Prostate gland (tissue), 2 donors: ENCODE measurements at regions of chr20 and their contacts with region 1.

Region 1: GRCh38 chr20:56554869-56555268 is 21.8 kb downstream of the FAM209B start:
- DNase-seq: peak; percentile 43
- H3K4me3 ChIP-seq: no peak overlapping the region
- H3K27ac ChIP-seq: no peak overlapping the region
- H3K4me1 ChIP-seq: no peaks in the 10 kb centered on the region
- H3K27me3 ChIP-seq: no peaks in the 10 kb centered on the region
- CTCF ChIP-seq: peak in 1 of 4 experiments; percentile 33
- POLR2A ChIP-seq: no peak

Region 2: GRCh38 chr20:56453352-56453751 is 101.5 kb before region 1 on chr20:
- intact Hi-C with region 1: no loop called
- DNase-seq: no peak
- H3K4me3 ChIP-seq: no peak overlapping the region
- H3K27ac ChIP-seq: no peak overlapping the region
- H3K4me1 ChIP-seq: no peaks in the 10 kb centered on the region
- H3K27me3 ChIP-seq: no peaks in the 10 kb centered on the region
- CTCF ChIP-seq: no peak
- POLR2A ChIP-seq: no peak

Region 3: GRCh38 chr20:57061058-57061900 is 506.4 kb after region 1 on chr20:
- intact Hi-C with region 1: loop called (anchors 5 kb)
- DNase-seq: peak; percentile 58
- H3K4me3 ChIP-seq: no peak overlapping the region
- H3K27ac ChIP-seq: no peak overlapping the region
- H3K4me1 ChIP-seq: no peaks in the 10 kb centered on the region
- H3K27me3 ChIP-seq: no peaks in the 10 kb centered on the region
- CTCF ChIP-seq: peak; percentile 16 to 60 (median 50)
- POLR2A ChIP-seq: no peak

Region 4: GRCh38 chr20:57709931-57710799 is 1155.3 kb after region 1 on chr20 and contains the start of gene PMEPA1:
- intact Hi-C with region 1: no loop called
- DNase-seq: peak; percentile 95
- H3K4me3 ChIP-seq: peak within 1 kb of the TSS; percentile 78 to 81
- H3K27ac ChIP-seq: peak within 1 kb of the TSS; percentile 98 to 99
- H3K4me1 ChIP-seq: no peaks in the 10 kb centered on the region
- H3K27me3 ChIP-seq: no peaks in the 10 kb centered on the region
- CTCF ChIP-seq: peak in 2 of 4 experiments; percentile 34 to 73
- POLR2A ChIP-seq: peak; percentile 95
- total RNA-seq, gene PMEPA1: 96.5 to 245 TPM